ENCODE measurements at regions of chr1 and their contacts with region 1.

Region 1: GRCh38 chr1:85502625-85503083 is 37.7 kb upstream of the DDAH1 start:
- DNase-seq: no peak
- ATAC-seq: peak; percentile 41
- H3K4me3 ChIP-seq: no peak overlapping the region
- H3K27ac ChIP-seq: no peak overlapping the region
- H3K4me1 ChIP-seq: no peaks in the 10 kb centered on the region
- H3K27me3 ChIP-seq: no peaks in the 10 kb centered on the region; a peak in 1 of 4 replicates
- CTCF ChIP-seq: peak in 2 of 3 experiments; percentile 13 to 26; a peak in 3 of 6 replicates
- EP300 ChIP-seq: no peak
- POLR2A ChIP-seq: no peak
- RAD21 ChIP-seq: peak; percentile 23; the same call in 1 of the 2 replicates

Region 2: DNA sequence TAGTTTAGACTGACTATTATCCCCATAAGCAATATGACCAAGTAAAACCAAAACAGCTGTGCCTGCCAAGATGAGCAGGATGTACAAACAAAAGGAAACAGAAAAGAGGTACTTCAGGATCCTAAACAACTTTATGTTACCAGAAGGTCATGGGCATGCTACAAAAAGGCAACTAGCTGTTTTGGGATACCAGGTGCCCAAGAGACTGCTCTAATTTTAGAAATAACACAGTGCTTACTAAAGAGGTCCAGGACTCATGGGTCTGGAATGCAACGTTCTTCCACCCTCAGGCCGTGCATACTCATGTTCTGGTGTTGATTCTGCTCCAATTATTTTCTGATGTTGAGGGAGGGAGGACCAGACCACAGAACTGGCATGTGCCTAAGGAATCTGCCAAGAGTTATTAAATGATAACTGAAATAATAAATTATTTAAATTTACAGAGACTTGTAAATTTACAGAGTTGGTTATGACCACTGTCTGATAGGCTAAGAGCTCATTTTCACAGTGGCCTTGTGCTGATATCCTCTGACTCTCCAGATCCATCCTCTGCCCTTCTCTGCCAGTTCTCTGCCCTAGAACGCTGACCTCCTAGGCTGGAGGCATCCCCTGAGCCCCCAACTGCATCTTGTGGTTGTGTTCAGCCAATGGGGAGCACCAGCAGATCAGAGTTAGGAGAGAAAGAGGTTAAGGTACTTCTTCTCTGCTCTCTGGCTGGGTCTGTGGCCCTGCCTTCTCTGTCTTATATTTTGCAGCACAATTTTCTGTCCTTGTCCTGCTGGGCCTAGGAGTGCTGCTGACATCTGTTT is 188.6 kb before region 1 on chr1:
- CTCF ChIA-PET with region 1: no interaction called
- POLR2A ChIA-PET with region 1: no interaction called
- RAD21 ChIA-PET with region 1: no interaction called
- SMC1A ChIA-PET with region 1: no interaction called
- in situ Hi-C with region 1: no loop called
- intact Hi-C with region 1: loop called (anchors 5 kb)
- DNase-seq: no peak
- ATAC-seq: no peak
- H3K4me3 ChIP-seq: no peak overlapping the region
- H3K27ac ChIP-seq: no peak overlapping the region
- H3K4me1 ChIP-seq: no peaks in the 10 kb centered on the region
- H3K27me3 ChIP-seq: peaks cover 0 to 4% of the 10 kb centered on the region in 2 experiments; a peak in 2 of 4 replicates
- CTCF ChIP-seq: no peak
- EP300 ChIP-seq: no peak
- POLR2A ChIP-seq: no peak
- RAD21 ChIP-seq: no peak

Region 3: GRCh38 chr1:85865213-85865612 is 362.6 kb after region 1 on chr1:
- CTCF ChIA-PET with region 1: no interaction called
- POLR2A ChIA-PET with region 1: no interaction called
- RAD21 ChIA-PET with region 1: no interaction called
- SMC1A ChIA-PET with region 1: no interaction called
- in situ Hi-C with region 1: no loop called
- intact Hi-C with region 1: no loop called
- DNase-seq: no peak
- ATAC-seq: no peak
- H3K4me3 ChIP-seq: no peak overlapping the region
- H3K27ac ChIP-seq: no peak overlapping the region
- H3K4me1 ChIP-seq: no peaks in the 10 kb centered on the region
- H3K27me3 ChIP-seq: no peaks in the 10 kb centered on the region
- CTCF ChIP-seq: no peak
- EP300 ChIP-seq: no peak
- POLR2A ChIP-seq: no peak
- RAD21 ChIP-seq: no peak